Endothelial cell of umbilical vein (primary cell): ENCODE measurements at regions of chr2 and their contacts with region 1.

Region 1: GRCh38 chr2:232521959-232522622 is 1.9 kb downstream of the PRSS56 start:
- DNase-seq: peak; percentile 10
- H3K4me3 ChIP-seq: no peak overlapping the region
- H3K27ac ChIP-seq: no peak overlapping the region
- H3K4me1 ChIP-seq: no peaks in the 10 kb centered on the region
- H3K27me3 ChIP-seq: peaks cover 21 to 31% of the 10 kb centered on the region in 2 experiments
- CTCF ChIP-seq: peak; percentile 63 to 76
- POLR2A ChIP-seq: no peak

Region 2: GRCh38 chr2:232447638-232448303 is 74.3 kb before region 1 on chr2:
- CTCF ChIA-PET with region 1: interaction called, 44 read pairs
- POLR2A ChIA-PET with region 1: no interaction called
- dilution Hi-C with region 1: no loop called
- intact Hi-C with region 1: no loop called
- DNase-seq: no peak
- H3K4me3 ChIP-seq: no peak overlapping the region
- H3K27ac ChIP-seq: no peak overlapping the region
- H3K4me1 ChIP-seq: no peaks in the 10 kb centered on the region
- H3K27me3 ChIP-seq: no peaks in the 10 kb centered on the region
- CTCF ChIP-seq: no peak
- POLR2A ChIP-seq: no peak

Region 3: DNA sequence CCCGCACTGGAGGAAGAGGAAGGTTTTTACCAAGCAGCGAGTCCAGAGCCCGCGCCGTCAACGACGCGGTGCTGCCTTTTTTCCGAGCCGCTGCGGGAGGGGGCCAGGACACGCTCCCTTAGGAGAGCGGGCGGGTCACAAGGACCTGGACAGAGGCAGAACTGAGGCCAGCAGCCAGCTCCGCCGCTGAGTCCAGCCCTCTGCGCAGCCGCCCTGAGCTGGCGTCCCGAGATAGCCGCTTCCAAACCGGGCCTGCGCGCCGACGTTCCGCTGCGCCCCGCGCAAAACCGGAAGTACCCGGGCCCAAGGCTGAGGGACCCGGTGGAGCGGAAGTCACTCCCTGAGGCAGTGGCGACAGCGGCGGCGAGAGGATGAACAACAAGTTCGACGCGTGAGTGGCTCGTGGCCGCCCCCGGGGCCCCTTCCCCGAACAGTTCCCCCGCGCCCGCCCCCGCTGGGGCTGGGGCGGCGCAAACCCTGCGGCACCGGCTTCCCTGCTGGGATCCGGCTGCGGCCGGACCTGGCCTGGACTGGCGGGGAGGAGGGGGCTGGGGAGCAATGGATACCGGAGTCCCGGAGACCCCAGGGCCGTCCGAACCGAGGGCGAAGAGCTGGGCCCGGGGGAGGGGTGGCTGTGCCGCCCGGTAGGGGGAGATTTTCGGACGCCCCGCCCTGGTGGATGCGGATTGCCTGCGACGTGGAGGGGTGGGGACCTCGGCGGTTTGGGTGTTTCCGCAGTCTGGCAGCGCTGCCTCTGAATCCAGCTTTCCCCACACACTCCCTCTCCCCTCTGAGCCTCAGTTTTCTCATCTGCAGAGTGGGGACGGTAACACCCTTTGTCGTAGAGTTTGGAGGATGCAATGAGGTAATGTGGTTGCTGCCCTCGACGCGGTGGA is 28.5 kb after region 1 on chr2 and contains the starts of genes EIF4E2 and TIGD1:
- CTCF ChIA-PET with region 1: interaction called, 7 read pairs
- POLR2A ChIA-PET with region 1: no interaction called
- dilution Hi-C with region 1: no loop called
- intact Hi-C with region 1: loop called (anchors 2 kb)
- DNase-seq: peak; percentile 96
- H3K4me3 ChIP-seq: peak within 1 kb of the TSS; percentile 71 to 94 (median 79)
- H3K27ac ChIP-seq: peak within 1 kb of the TSS; percentile 87
- H3K4me1 ChIP-seq: peaks cover 6% of the 10 kb centered on the region
- H3K27me3 ChIP-seq: no peaks in the 10 kb centered on the region
- CTCF ChIP-seq: peak in 1 of 2 donors; percentile 29
- POLR2A ChIP-seq: peak; percentile 94
- total RNA-seq, gene EIF4E2: 96.5 and 96.9 TPM in 2 replicates
- total RNA-seq, gene TIGD1: 2.9 and 3.3 TPM in 2 replicates